ENCODE measurements at regions of chr2 and their contacts with region 1.

Region 1: DNA sequence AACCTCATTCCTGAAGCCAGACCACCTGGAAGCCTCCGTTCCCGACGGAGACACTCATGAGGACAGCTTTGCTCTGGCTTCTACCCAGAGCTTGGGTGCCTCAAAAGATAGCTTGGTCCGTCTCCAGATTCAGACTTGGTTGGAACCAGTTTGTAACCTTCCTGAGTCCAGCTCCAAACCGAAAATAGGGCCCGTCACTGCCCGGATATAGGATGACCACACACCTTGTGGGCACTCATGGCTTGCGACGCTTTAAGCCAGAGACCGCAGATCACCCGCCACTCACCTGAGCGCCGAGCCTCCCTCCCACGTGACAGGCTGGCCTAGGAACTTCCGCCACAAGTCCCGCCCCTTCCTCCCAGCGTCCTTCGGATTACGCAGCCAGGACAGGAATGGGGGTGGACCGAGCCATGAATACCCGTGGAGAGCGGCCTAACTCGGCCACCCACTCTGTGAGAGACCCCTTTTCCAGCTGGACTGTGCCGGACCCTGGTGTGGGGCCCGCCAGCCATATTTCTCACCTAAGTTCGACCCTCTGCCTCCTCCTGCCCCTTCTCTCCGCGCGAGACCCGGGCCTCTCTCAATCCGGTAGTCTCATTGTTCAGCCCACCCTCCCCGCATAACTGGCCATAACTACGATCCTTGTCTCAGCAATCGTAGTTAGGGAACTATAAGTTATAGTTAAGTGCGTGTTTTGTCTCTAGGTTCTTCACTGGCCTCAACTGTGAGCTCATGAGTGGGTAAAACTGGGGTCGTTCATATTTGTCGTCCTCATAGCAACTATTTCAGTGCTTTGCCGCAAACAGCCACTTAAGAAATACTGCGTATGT is at the start of gene MPV17:
- DNase-seq: peak; percentile 95 to 99
- ATAC-seq: peak; percentile 82 to 90
- H3K4me3 ChIP-seq: peak within 1 kb of the TSS; percentile 58
- H3K27ac ChIP-seq: peak within 1 kb of the TSS; percentile 93 to 99
- H3K4me1 ChIP-seq: peaks cover 31% of the 10 kb centered on the region
- CTCF ChIP-seq: no peak
- EP300 ChIP-seq: no peak
- POLR2A ChIP-seq: peak; percentile 95
- RAD21 ChIP-seq: no peak
- polyA plus RNA-seq, gene MPV17: 130 and 157 TPM in 2 replicates

Region 2: DNA sequence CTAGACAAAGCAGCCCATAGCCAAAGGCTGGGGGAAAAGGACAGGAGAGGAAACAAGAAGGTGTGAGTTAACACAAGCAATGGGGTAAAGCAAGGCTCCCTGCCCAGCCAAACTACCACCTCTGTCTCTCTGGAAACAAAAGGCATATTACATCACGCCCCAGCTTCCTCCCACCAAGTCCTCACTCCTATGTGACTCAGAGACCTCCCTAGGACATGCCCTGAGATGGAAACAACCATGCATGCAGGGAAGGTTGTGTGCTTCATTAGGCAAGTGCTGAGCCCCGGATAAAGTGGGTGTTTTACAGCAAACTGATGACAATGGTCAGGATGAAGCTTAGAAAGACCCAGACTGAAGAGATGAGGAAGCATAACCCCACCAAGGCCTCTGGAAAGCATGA is 120.1 kb before region 1 on chr2:
- CTCF ChIA-PET with region 1: no interaction called
- POLR2A ChIA-PET with region 1: no interaction called
- DNase-seq: no peak
- ATAC-seq: no peak
- H3K4me3 ChIP-seq: no peak overlapping the region
- H3K27ac ChIP-seq: no peak overlapping the region
- H3K4me1 ChIP-seq: no peaks in the 10 kb centered on the region
- CTCF ChIP-seq: no peak
- EP300 ChIP-seq: no peak
- POLR2A ChIP-seq: no peak
- RAD21 ChIP-seq: no peak

Region 3: GRCh38 chr2:27225526-27225925 is 97.5 kb before region 1 on chr2:
- CTCF ChIA-PET with region 1: no interaction called
- POLR2A ChIA-PET with region 1: no interaction called
- DNase-seq: no peak
- ATAC-seq: no peak
- H3K4me3 ChIP-seq: no peak overlapping the region
- H3K27ac ChIP-seq: no peak overlapping the region
- H3K4me1 ChIP-seq: no peaks in the 10 kb centered on the region
- CTCF ChIP-seq: no peak
- EP300 ChIP-seq: no peak
- POLR2A ChIP-seq: no peak
- RAD21 ChIP-seq: no peak

Region 4: DNA sequence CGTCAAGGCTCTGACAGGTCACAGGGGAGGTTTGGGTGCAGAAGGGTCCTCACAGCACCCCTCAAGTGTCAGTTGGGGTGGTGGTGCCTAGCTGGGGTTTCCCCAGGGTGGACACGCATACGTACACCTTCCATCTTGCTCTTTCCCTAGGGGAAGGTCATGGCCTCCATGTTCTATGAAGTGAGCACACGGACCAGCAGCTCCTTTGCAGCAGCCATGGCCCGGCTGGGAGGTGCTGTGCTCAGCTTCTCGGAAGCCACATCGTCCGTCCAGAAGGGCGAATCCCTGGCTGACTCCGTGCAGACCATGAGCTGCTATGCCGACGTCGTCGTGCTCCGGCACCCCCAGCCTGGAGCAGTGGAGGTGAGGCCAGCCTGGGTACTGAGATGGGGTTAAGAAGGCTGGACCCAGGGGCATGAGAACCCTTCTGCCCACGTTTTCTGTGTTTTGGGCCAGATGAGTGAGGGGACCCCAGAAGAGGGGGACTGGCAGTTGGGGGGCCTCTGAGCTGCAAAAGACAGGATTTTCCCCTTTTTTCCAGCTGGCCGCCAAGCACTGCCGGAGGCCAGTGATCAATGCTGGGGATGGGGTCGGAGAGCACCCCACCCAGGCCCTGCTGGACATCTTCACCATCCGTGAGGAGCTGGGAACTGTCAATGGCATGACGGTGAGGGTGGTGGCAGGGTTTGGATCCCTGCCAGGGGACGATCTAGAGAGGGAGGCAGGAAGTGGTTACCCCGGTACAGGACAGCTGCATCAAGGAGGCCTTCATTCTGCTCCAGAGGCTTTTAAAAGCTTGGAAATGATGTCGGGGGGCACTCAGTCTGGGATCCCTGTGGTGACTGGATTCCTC is 81.0 kb before region 1 on chr2:
- CTCF ChIA-PET with region 1: no interaction called
- POLR2A ChIA-PET with region 1: no interaction called
- DNase-seq: no peak
- ATAC-seq: no peak
- H3K4me3 ChIP-seq: no peak overlapping the region
- H3K27ac ChIP-seq: no peak overlapping the region
- H3K4me1 ChIP-seq: no peaks in the 10 kb centered on the region
- CTCF ChIP-seq: no peak
- EP300 ChIP-seq: no peak
- POLR2A ChIP-seq: no peak
- RAD21 ChIP-seq: no peak

Region 5: GRCh38 chr2:27308359-27308881 is 14.6 kb before region 1 on chr2 and contains the start of gene UCN:
- CTCF ChIA-PET with region 1: interaction called, 171 read pairs
- POLR2A ChIA-PET with region 1: interaction called, 4 read pairs
- DNase-seq: no peak
- ATAC-seq: no peak
- H3K4me3 ChIP-seq: no peak within 1 kb of the TSS
- H3K27ac ChIP-seq: no peak within 1 kb of the TSS
- H3K4me1 ChIP-seq: no peaks in the 10 kb centered on the region
- CTCF ChIP-seq: no peak
- EP300 ChIP-seq: no peak
- POLR2A ChIP-seq: no peak
- RAD21 ChIP-seq: no peak
- polyA plus RNA-seq, gene UCN: 1.0 TPM in 2 replicates

Region 6: GRCh38 chr2:27335311-27335710 is 12.3 kb after region 1 on chr2:
- CTCF ChIA-PET with region 1: interaction called, 11 read pairs
- POLR2A ChIA-PET with region 1: interaction called, 10 read pairs
- DNase-seq: no peak
- ATAC-seq: peak; percentile 16 to 50; a peak in 4 of 6 replicates
- H3K4me3 ChIP-seq: no peak overlapping the region
- H3K27ac ChIP-seq: no peak overlapping the region
- H3K4me1 ChIP-seq: no peaks in the 10 kb centered on the region
- CTCF ChIP-seq: no peak
- EP300 ChIP-seq: no peak
- POLR2A ChIP-seq: no peak
- RAD21 ChIP-seq: no peak

Region 7: GRCh38 chr2:27356382-27357181 is 33.6 kb after region 1 on chr2 and contains the start of gene GTF3C2:
- CTCF ChIA-PET with region 1: interaction called, 5 read pairs
- POLR2A ChIA-PET with region 1: interaction called, 11 read pairs
- DNase-seq: peak; percentile 95 to 99
- ATAC-seq: peak; percentile 93 to 96
- H3K4me3 ChIP-seq: peak within 1 kb of the TSS; percentile 82
- H3K27ac ChIP-seq: peak within 1 kb of the TSS; percentile 83 to 91
- H3K4me1 ChIP-seq: peaks cover 28% of the 10 kb centered on the region
- CTCF ChIP-seq: no peak
- EP300 ChIP-seq: no peak
- POLR2A ChIP-seq: peak; percentile 50
- RAD21 ChIP-seq: no peak
- polyA plus RNA-seq, gene GTF3C2: 101 and 130 TPM in 2 replicates

Region 8: GRCh38 chr2:27363933-27364332 is 41.0 kb after region 1 on chr2:
- CTCF ChIA-PET with region 1: interaction called, 53 read pairs
- POLR2A ChIA-PET with region 1: interaction called, 4 read pairs
- DNase-seq: no peak
- ATAC-seq: no peak
- H3K4me3 ChIP-seq: no peak overlapping the region
- H3K27ac ChIP-seq: no peak overlapping the region
- H3K4me1 ChIP-seq: peaks cover 4% of the 10 kb centered on the region
- CTCF ChIP-seq: no peak
- EP300 ChIP-seq: no peak
- POLR2A ChIP-seq: no peak
- RAD21 ChIP-seq: no peak

Region 9: GRCh38 chr2:27370026-27370815 is 47.2 kb after region 1 on chr2 and contains the starts of genes EIF2B4 and SNX17:
- CTCF ChIA-PET with region 1: interaction called, 53 read pairs
- POLR2A ChIA-PET with region 1: interaction called, 4 read pairs
- DNase-seq: peak; percentile 98 to 99
- ATAC-seq: peak; percentile 90 to 94
- H3K4me3 ChIP-seq: peak within 1 kb of the TSS; percentile 79
- H3K27ac ChIP-seq: peak within 1 kb of the TSS; percentile 89 to 95
- H3K4me1 ChIP-seq: peaks cover 24% of the 10 kb centered on the region
- CTCF ChIP-seq: peak; percentile 94
- EP300 ChIP-seq: peak in 1 of 2 experiments; percentile 24; a peak in 1 of 5 replicates
- POLR2A ChIP-seq: peak; percentile 90
- RAD21 ChIP-seq: peak; percentile 58; a peak in 3 of 5 replicates
- polyA plus RNA-seq, gene EIF2B4: 62.8 and 90.3 TPM in 2 replicates
- polyA plus RNA-seq, gene SNX17: 141 and 158 TPM in 2 replicates

Region 10: DNA sequence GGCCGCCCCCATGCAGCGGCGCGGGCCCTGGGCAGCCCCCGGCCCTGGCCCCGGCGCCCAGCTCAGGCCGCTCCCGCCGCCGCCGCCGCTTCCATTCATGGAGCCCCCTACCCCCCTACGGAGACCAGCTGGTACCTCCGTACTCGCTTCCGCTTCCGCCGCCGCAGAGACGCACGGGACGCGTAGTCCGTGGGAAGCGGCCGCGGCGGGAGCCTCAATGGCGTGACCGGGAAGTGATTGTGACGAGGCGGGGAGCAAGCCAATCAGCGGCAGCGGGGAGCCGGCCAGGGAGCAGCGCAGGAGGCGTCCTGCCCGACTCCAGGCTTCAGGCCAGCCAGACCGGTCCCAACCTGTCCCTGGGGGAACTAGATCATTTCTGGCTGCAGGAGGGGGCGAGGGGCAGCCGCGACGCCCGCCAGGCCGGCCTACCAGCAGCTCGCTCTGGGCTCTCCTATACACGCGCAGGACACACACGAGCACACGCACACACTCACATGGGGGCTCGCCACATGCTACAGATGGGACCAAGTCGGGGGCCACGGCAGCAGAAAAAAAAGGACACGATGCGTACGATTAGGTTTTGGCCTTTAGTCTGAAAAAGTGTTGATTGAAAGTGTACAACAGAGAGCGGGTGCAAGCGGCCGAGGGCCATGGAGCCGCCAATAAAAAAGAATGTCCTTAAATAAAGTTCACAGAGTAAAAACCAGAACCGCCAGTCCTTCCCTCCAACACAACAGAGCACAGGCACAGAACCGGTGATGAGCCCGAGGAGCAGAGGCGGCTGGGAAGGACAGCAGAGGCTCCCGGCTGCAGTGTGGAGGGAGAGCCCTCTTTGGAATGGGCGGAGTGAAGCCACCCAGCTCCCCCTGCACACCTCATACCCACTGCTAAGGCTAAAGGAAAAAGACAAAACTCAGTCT is 57.9 kb after region 1 on chr2 and contains the start of gene ZNF513:
- CTCF ChIA-PET with region 1: interaction called, 50 read pairs
- POLR2A ChIA-PET with region 1: no interaction called
- DNase-seq: peak; percentile 94
- ATAC-seq: peak; percentile 81 to 88
- H3K4me3 ChIP-seq: peak within 1 kb of the TSS; percentile 72
- H3K27ac ChIP-seq: peak within 1 kb of the TSS; percentile 92 to 94
- H3K4me1 ChIP-seq: peaks cover 24% of the 10 kb centered on the region
- CTCF ChIP-seq: no peak
- EP300 ChIP-seq: no peak
- POLR2A ChIP-seq: peak; percentile 56
- RAD21 ChIP-seq: no peak
- polyA plus RNA-seq, gene ZNF513: 9.9 and 10.8 TPM in 2 replicates